Left lung (tissue), 14 donors: ENCODE measurements at regions of chr1 and their contacts with region 1.

Region 1: GRCh38 chr1:109548321-109549267 is at the start of gene GNAI3:
- DNase-seq: peak; percentile 96 to 99 (median 97)
- ATAC-seq: peak; percentile 98
- H3K4me3 ChIP-seq: peak within 1 kb of the TSS; percentile 71 to 83
- H3K27ac ChIP-seq: peak within 1 kb of the TSS; percentile 93 to 98
- H3K4me1 ChIP-seq: peaks cover 23 to 61% of the 10 kb centered on the region in 2 donors
- H3K27me3 ChIP-seq: no peaks in the 10 kb centered on the region
- CTCF ChIP-seq: no peak
- polyA plus RNA-seq, gene GNAI3: 9.8 to 11.5 (median 11.1) TPM

Region 2: GRCh38 chr1:109620841-109621286 is 72.3 kb after region 1 on chr1:
- intact Hi-C with region 1: loop called in 1 of 2 experiments (anchors 5 kb)
- DNase-seq: peak; percentile 84 to 100 (median 96)
- ATAC-seq: peak; percentile 85
- H3K4me3 ChIP-seq: peak overlapping the region; percentile 54 to 89
- H3K27ac ChIP-seq: peak overlapping the region; percentile 89 to 95
- H3K4me1 ChIP-seq: peaks cover 19 to 77% of the 10 kb centered on the region in 2 donors
- H3K27me3 ChIP-seq: no peaks in the 10 kb centered on the region
- CTCF ChIP-seq: no peak

Region 3: DNA sequence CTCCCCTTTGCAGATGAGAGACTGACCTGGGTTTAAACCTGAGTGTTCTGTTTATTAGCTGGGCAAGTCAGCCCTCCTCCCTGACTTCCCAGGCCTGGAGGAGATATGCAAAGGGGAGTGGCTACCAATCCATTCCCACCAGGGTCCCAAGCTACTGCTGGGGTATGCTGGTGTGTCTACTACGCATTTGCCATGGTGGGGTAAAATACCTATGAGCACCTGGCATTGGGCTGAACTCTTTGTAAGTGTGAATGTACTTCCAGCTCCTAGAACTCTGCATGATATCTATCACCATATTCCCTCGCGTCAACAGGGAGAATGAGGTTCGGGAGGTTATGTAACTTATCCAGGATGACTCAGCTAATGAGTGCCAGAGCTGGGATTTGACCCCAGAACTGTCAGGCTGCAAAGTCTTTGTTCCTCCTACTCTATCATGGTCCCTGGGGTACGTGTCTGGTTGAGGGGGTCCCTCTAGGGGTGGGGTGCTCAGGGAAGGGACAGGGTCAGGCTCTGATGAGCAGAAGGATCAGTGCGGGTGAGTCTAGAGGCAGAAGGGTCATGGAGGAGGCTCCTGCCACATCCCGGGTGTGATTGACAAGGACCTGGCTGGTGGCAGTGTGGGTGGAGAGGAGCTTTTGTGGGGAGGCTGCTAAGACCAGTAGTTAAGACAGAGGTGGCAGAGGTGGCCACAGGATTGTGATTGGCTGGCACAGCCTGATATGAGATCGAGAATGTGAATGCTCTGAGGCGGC is 87.8 kb after region 1 on chr1:
- intact Hi-C with region 1: no loop called
- DNase-seq: no peak
- ATAC-seq: peak; percentile 9
- H3K4me3 ChIP-seq: no peak overlapping the region
- H3K27ac ChIP-seq: no peak overlapping the region
- H3K4me1 ChIP-seq: peaks cover 7 to 12% of the 10 kb centered on the region in 2 donors
- H3K27me3 ChIP-seq: no peaks in the 10 kb centered on the region
- CTCF ChIP-seq: no peak